Caco-2 (cell line): ENCODE measurements at regions of chr6 and their contacts with region 1.

Region 1: GRCh38 chr6:87393022-87393622 is 14.7 kb upstream of the CFAP206 start:
- DNase-seq: peak in 1 of 2 experiments; percentile 52
- H3K4me3 ChIP-seq: no peak overlapping the region
- H3K4me3 Mint-ChIP-seq: no peak overlapping the region
- H3K27ac Mint-ChIP-seq: no peak overlapping the region
- H3K4me1 ChIP-seq: no peaks in the 10 kb centered on the region
- H3K4me1 Mint-ChIP-seq: no peaks in the 10 kb centered on the region
- H3K27me3 ChIP-seq: no peaks in the 10 kb centered on the region
- H3K27me3 Mint-ChIP-seq: no peaks in the 10 kb centered on the region
- CTCF ChIP-seq: peak; percentile 63 to 64

Region 2: GRCh38 chr6:87066449-87067333 is 326.4 kb before region 1 on chr6:
- CTCF ChIA-PET with region 1: interaction called, 15 read pairs
- POLR2A ChIA-PET with region 1: no interaction called
- intact Hi-C with region 1: loop called (anchors 1 kb)
- DNase-seq: peak; percentile 44 to 51
- H3K4me3 ChIP-seq: peak overlapping the region; percentile 15; the same call in 1 of the 2 replicates
- H3K4me3 Mint-ChIP-seq: peak overlapping the region; percentile 69
- H3K27ac Mint-ChIP-seq: no peak overlapping the region
- H3K4me1 ChIP-seq: peaks cover 14% of the 10 kb centered on the region
- H3K4me1 Mint-ChIP-seq: peaks cover 26% of the 10 kb centered on the region
- H3K27me3 ChIP-seq: no peaks in the 10 kb centered on the region
- H3K27me3 Mint-ChIP-seq: no peaks in the 10 kb centered on the region
- CTCF ChIP-seq: peak; percentile 33 to 53

Region 3: DNA sequence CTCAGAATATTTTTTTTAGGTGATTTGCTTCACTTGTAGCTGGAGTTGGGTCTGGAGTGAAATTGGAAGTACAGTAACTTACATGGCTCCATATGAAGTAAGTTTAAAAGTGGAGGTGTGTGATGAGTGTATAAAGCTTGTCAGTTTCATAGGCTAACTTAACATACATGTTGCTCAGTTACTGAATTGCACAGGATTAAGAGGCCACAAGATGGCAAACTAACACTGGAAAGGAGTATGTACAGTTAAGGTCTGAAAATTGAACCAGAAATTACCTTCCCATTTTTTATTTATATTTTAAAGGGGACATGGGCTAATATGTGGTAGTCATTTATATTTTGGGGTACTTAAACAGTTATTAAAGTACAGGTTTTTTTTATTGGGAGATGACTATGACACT is 116.0 kb before region 1 on chr6:
- CTCF ChIA-PET with region 1: interaction called, 13 read pairs
- POLR2A ChIA-PET with region 1: no interaction called
- intact Hi-C with region 1: loop called (anchors 1 kb)
- DNase-seq: peak in 1 of 2 experiments; percentile 12
- H3K4me3 ChIP-seq: no peak overlapping the region
- H3K4me3 Mint-ChIP-seq: no peak overlapping the region
- H3K27ac Mint-ChIP-seq: no peak overlapping the region
- H3K4me1 ChIP-seq: no peaks in the 10 kb centered on the region
- H3K4me1 Mint-ChIP-seq: no peaks in the 10 kb centered on the region
- H3K27me3 ChIP-seq: no peaks in the 10 kb centered on the region
- H3K27me3 Mint-ChIP-seq: no peaks in the 10 kb centered on the region
- CTCF ChIP-seq: peak in 1 of 2 experiments; percentile 47

Region 4: DNA sequence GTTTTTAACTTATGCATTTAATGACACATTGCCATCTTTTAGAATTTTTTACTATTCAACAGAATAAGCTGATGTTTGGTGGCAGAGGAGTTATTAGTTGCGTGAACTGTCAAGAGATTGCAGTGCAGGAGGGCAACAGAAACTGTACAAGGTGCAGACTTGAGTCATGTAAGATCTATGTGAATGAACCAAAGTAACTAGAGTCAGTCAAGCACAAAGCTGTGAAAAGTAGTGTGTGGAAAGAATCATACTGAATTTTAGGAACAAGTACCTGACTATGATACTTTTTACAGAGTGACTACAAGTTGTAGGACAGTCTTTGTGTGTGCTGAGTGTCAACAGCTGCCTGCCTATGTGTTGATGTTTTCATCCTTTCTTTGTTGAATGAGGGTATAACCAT is 51.2 kb before region 1 on chr6:
- CTCF ChIA-PET with region 1: no interaction called
- POLR2A ChIA-PET with region 1: no interaction called
- intact Hi-C with region 1: loop called (anchors 1 kb)
- DNase-seq: no peak
- H3K4me3 ChIP-seq: no peak overlapping the region
- H3K4me3 Mint-ChIP-seq: no peak overlapping the region
- H3K27ac Mint-ChIP-seq: no peak overlapping the region
- H3K4me1 ChIP-seq: peaks cover 25% of the 10 kb centered on the region
- H3K4me1 Mint-ChIP-seq: peaks cover 24% of the 10 kb centered on the region
- H3K27me3 ChIP-seq: no peaks in the 10 kb centered on the region
- H3K27me3 Mint-ChIP-seq: no peaks in the 10 kb centered on the region
- CTCF ChIP-seq: no peak

Region 5: GRCh38 chr6:87472525-87473418 is 79.7 kb after region 1 on chr6 and contains the start of gene SLC35A1:
- CTCF ChIA-PET with region 1: no interaction called
- POLR2A ChIA-PET with region 1: no interaction called
- intact Hi-C with region 1: loop called (anchors 1 kb)
- DNase-seq: peak; percentile 73 to 86
- H3K4me3 ChIP-seq: peak within 1 kb of the TSS; percentile 84
- H3K4me3 Mint-ChIP-seq: peak within 1 kb of the TSS; percentile 84
- H3K27ac Mint-ChIP-seq: peak within 1 kb of the TSS; percentile 93
- H3K4me1 ChIP-seq: no peaks in the 10 kb centered on the region
- H3K4me1 Mint-ChIP-seq: no peaks in the 10 kb centered on the region
- H3K27me3 ChIP-seq: no peaks in the 10 kb centered on the region
- H3K27me3 Mint-ChIP-seq: peaks cover 2% of the 10 kb centered on the region
- CTCF ChIP-seq: peak; percentile 14 to 25
- total RNA-seq, gene SLC35A1: 12.3 and 12.7 TPM in 2 replicates

Region 6: GRCh38 chr6:87514831-87515230 is 121.7 kb after region 1 on chr6:
- CTCF ChIA-PET with region 1: no interaction called
- POLR2A ChIA-PET with region 1: no interaction called
- intact Hi-C with region 1: no loop called
- DNase-seq: no peak
- H3K4me3 ChIP-seq: no peak overlapping the region
- H3K4me3 Mint-ChIP-seq: no peak overlapping the region
- H3K27ac Mint-ChIP-seq: no peak overlapping the region
- H3K4me1 ChIP-seq: no peaks in the 10 kb centered on the region
- H3K4me1 Mint-ChIP-seq: no peaks in the 10 kb centered on the region
- H3K27me3 ChIP-seq: no peaks in the 10 kb centered on the region
- H3K27me3 Mint-ChIP-seq: no peaks in the 10 kb centered on the region
- CTCF ChIP-seq: no peak